BJ (cell line): ENCODE measurements at regions of chrX and their contacts with region 1.

Region 1: GRCh38 chrX:119887721-119888425 is 7.8 kb upstream of the AKAP14 start:
- DNase-seq: no peak
- H3K4me3 ChIP-seq: peak overlapping the region; percentile 29
- H3K27me3 ChIP-seq: no peaks in the 10 kb centered on the region
- CTCF ChIP-seq: peak; percentile 66

Region 2: GRCh38 chrX:119900976-119901375 is 13.1 kb after region 1 on chrX:
- CTCF ChIA-PET with region 1: no interaction called
- POLR2A ChIA-PET with region 1: interaction called, 19 read pairs
- DNase-seq: no peak
- H3K4me3 ChIP-seq: no peak overlapping the region
- H3K27me3 ChIP-seq: no peaks in the 10 kb centered on the region
- CTCF ChIP-seq: no peak

Region 3: GRCh38 chrX:120120223-120120622 is 232.3 kb after region 1 on chrX:
- CTCF ChIA-PET with region 1: no interaction called
- POLR2A ChIA-PET with region 1: no interaction called
- DNase-seq: no peak
- H3K4me3 ChIP-seq: no peak overlapping the region
- H3K27me3 ChIP-seq: no peaks in the 10 kb centered on the region
- CTCF ChIP-seq: no peak